Naive thymus-derived CD4-positive, alpha-beta T cell (primary cell): ENCODE measurements at regions of chr1 and their contacts with region 1.

Region 1: DNA sequence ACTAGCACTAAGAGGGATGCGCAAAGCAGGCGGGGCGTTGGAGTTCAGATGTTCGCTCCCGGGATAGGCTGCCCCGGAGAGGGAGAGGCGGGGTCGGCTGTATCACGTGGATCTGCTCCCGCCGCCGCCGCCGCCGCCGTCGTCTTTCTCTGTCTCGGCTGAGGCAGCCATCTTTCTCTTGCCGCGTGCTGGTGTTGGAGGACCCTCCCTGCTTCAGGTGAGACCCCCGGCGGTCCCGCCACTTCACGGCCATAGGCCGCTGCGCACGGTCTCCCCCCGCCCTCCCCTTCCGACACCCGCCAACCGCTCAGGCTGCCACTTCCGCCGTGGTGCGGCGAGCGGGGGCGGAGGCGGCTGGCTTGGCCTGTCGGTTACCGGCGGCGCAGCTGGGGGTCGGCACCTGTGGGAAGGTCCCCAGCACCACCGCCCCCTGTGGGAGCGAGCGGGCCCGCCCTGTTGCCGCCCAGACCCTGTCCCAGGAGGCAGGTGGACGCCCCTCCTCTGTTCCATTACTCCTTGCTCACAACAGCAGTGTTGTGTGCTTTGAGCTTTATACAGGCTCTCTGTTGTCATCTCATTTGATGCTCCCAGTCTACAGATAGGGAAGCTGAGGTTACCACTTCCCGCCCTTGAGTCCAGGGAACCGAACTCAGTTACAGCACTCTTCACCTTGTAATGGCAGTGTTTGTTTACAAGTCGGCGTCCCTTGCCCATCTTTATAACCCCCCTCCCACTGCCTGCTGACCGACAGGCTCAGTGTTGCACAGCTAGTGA is at the start of gene BTF3L4:
- DNase-seq: peak; percentile 74 to 94 (median 90)
- ATAC-seq: peak; percentile 97
- H3K4me3 ChIP-seq: peak within 1 kb of the TSS; percentile 92
- H3K4me3 Mint-ChIP-seq: peak within 1 kb of the TSS; percentile 93 to 100 (median 98)
- H3K27ac ChIP-seq: peak within 1 kb of the TSS; percentile 87
- H3K27ac Mint-ChIP-seq: peak within 1 kb of the TSS; percentile 91 to 99 (median 96)
- H3K4me1 ChIP-seq: peaks cover 19 to 24% of the 10 kb centered on the region in 2 donors
- H3K4me1 Mint-ChIP-seq: peaks cover 39 to 79% (median 65%) of the 10 kb centered on the region in 7 donors
- H3K27me3 ChIP-seq: no peaks in the 10 kb centered on the region
- H3K27me3 Mint-ChIP-seq: no peaks in the 10 kb centered on the region
- total RNA-seq, gene BTF3L4: 30.4 to 41.2 (median 35.8) TPM

Region 2: GRCh38 chr1:50968158-50968820 is 1088.1 kb before region 1 on chr1:
- CTCF ChIA-PET with region 1: no interaction called
- POLR2A ChIA-PET with region 1: no interaction called
- intact Hi-C with region 1: loop called in 1 of 2 experiments (anchors 5 kb)
- DNase-seq: peak; percentile 67 to 86 (median 85)
- ATAC-seq: peak; percentile 89
- H3K4me3 ChIP-seq: peak overlapping the region; percentile 83
- H3K4me3 Mint-ChIP-seq: peak overlapping the region; percentile 92 to 99 (median 98)
- H3K27ac ChIP-seq: peak overlapping the region; percentile 96
- H3K27ac Mint-ChIP-seq: peak overlapping the region; percentile 71 to 100 (median 91)
- H3K4me1 ChIP-seq: peaks cover 6 to 15% of the 10 kb centered on the region in 2 donors
- H3K4me1 Mint-ChIP-seq: peaks cover 18 to 29% (median 26%) of the 10 kb centered on the region in 7 donors
- H3K27me3 ChIP-seq: no peaks in the 10 kb centered on the region
- H3K27me3 Mint-ChIP-seq: peaks cover 0 to 12% (median 2%) of the 10 kb centered on the region in 5 donors

Region 3: DNA sequence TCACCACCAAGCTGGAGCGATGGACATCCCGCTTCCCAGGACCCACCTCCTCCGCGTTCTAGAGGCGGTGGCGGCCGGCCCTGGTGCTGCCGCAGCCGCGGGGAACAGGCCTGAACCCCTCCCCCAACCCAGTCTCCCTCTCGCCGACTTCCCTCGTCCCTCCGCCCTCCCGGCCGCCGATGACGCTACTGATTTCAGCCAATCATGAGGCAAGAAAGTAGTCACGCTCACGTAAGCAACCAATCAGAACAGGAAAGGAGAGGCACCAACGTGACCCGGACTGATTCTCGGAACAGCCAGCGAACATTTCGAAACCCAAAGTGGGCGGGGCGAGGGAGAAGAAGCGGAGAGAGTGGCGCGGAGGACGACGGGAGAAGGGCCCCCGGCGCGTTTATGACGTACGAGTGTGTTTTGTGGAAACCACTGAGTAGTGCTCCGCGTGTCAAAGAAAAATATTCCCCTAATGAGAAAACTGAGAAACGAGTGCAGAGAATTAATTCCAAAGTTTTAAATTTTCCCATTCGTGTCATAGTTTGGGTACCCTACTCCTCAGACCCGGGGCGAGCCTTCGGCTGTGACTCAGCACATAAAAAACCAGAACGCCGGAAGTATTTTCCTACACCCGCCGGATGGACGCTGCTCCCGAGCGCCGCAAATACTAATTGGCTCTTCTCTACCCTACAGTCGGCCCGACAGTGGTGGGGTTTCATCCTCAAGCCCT is 177.6 kb before region 1 on chr1 and contains the start of gene NRDC:
- CTCF ChIA-PET with region 1: no interaction called
- POLR2A ChIA-PET with region 1: no interaction called
- intact Hi-C with region 1: loop called (anchors 1 kb)
- DNase-seq: peak; percentile 95 to 100 (median 99)
- ATAC-seq: peak; percentile 95
- H3K4me3 ChIP-seq: peak within 1 kb of the TSS; percentile 87
- H3K4me3 Mint-ChIP-seq: no peak within 1 kb of the TSS
- H3K27ac ChIP-seq: peak within 1 kb of the TSS; percentile 98
- H3K27ac Mint-ChIP-seq: no peak within 1 kb of the TSS
- H3K4me1 ChIP-seq: peaks cover 16 to 26% of the 10 kb centered on the region in 2 donors
- H3K4me1 Mint-ChIP-seq: peaks cover 0 to 30% (median 17%) of the 10 kb centered on the region in 7 donors
- H3K27me3 ChIP-seq: no peaks in the 10 kb centered on the region
- H3K27me3 Mint-ChIP-seq: peaks cover 7 to 15% (median 10%) of the 10 kb centered on the region in 5 donors
- total RNA-seq, gene NRDC: 93.1 to 194 (median 122) TPM

Region 4: DNA sequence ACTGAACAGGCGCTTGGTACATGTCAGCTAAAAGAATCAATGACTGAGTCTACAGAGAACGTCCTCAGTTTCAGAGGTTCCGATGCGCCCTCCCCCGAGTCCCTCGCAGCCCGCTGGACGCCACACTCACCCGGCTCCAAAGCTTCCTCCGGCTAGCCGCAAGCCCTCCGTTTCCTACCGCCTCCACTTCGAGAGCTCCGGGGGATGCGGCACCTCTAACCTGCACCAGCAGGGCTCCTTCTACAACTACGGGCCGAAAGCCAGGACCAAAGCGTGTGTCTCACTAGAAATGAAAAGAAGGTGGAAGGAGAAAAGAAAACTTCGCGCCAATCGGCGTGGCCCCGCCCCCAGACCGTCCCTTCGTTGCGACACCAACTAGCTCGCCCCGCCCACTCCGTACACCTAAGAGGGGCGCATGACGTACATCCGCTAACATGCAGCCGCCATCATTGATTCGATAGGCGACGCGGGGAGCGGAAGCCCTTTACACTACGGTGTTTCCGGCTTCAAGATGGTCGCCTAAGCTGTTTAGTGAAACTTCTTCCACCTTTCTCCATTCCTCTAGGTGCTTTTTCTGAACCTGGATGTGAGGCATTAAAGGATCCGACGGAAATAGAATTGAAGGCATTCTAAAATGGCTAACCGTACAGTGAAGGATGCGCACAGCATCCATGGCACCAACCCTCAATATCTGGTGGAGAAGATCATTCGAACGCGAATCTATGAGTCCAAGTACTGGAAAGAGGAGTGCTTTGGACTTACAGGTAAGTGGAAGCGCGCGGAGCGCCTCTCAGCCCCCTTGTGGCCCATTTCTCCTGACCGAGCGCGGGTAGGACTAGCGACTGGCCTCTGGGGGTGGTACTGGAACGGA is 348.0 kb after region 1 on chr1 and contains the starts of genes ORC1 and PRPF38A:
- CTCF ChIA-PET with region 1: no interaction called
- POLR2A ChIA-PET with region 1: interaction called, 3 read pairs
- intact Hi-C with region 1: loop called (anchors 1 to 2 kb)
- DNase-seq: peak; percentile 89 to 97 (median 96)
- ATAC-seq: peak; percentile 99
- H3K4me3 ChIP-seq: peak within 1 kb of the TSS; percentile 83
- H3K4me3 Mint-ChIP-seq: peak within 1 kb of the TSS; percentile 96 to 100 (median 99)
- H3K27ac ChIP-seq: peak within 1 kb of the TSS; percentile 92
- H3K27ac Mint-ChIP-seq: peak within 1 kb of the TSS; percentile 95 to 100 (median 98)
- H3K4me1 ChIP-seq: peaks cover 10 to 16% of the 10 kb centered on the region in 2 donors
- H3K4me1 Mint-ChIP-seq: peaks cover 11 to 66% (median 47%) of the 10 kb centered on the region in 7 donors
- H3K27me3 ChIP-seq: no peaks in the 10 kb centered on the region
- H3K27me3 Mint-ChIP-seq: no peaks in the 10 kb centered on the region
- total RNA-seq, gene ORC1: 0.97 to 25.2 (median 1.3) TPM
- total RNA-seq, gene PRPF38A: 62.1 to 98.7 (median 81.6) TPM

Region 5: GRCh38 chr1:52726265-52727113 is 670.1 kb after region 1 on chr1 and contains the start of gene ZYG11B:
- CTCF ChIA-PET with region 1: no interaction called
- POLR2A ChIA-PET with region 1: interaction called, 3 read pairs
- intact Hi-C with region 1: loop called (anchors 1 kb)
- DNase-seq: peak; percentile 80 to 93 (median 88)
- ATAC-seq: peak; percentile 97
- H3K4me3 ChIP-seq: peak within 1 kb of the TSS; percentile 85
- H3K4me3 Mint-ChIP-seq: peak within 1 kb of the TSS; percentile 88 to 99 (median 97)
- H3K27ac ChIP-seq: peak within 1 kb of the TSS; percentile 89
- H3K27ac Mint-ChIP-seq: peak within 1 kb of the TSS; percentile 72 to 97 (median 90)
- H3K4me1 ChIP-seq: peaks cover 12 to 19% of the 10 kb centered on the region in 2 donors
- H3K4me1 Mint-ChIP-seq: peaks cover 24 to 60% (median 54%) of the 10 kb centered on the region in 7 donors
- H3K27me3 ChIP-seq: no peaks in the 10 kb centered on the region
- H3K27me3 Mint-ChIP-seq: peaks cover 0 to 6% (median 0%) of the 10 kb centered on the region in 5 donors
- total RNA-seq, gene ZYG11B: 14.9 to 26.8 (median 17.9) TPM

Region 6: GRCh38 chr1:53326088-53326597 is 1269.8 kb after region 1 on chr1:
- CTCF ChIA-PET with region 1: no interaction called
- POLR2A ChIA-PET with region 1: no interaction called
- intact Hi-C with region 1: loop called (anchors 5 kb)
- DNase-seq: peak; percentile 70 to 96 (median 79)
- ATAC-seq: peak; percentile 93
- H3K4me3 ChIP-seq: peak overlapping the region; percentile 88
- H3K4me3 Mint-ChIP-seq: peak overlapping the region; percentile 89 to 98 (median 94)
- H3K27ac ChIP-seq: peak overlapping the region; percentile 56
- H3K27ac Mint-ChIP-seq: peak overlapping the region; percentile 15 to 96 (median 73)
- H3K4me1 ChIP-seq: peaks cover 5 to 14% of the 10 kb centered on the region in 2 donors
- H3K4me1 Mint-ChIP-seq: peaks cover 6 to 52% (median 12%) of the 10 kb centered on the region in 7 donors
- H3K27me3 ChIP-seq: no peaks in the 10 kb centered on the region
- H3K27me3 Mint-ChIP-seq: no peaks in the 10 kb centered on the region